Activated CD8-positive, alpha-beta T cell treated with anti-CD3 and anti-CD28 coated beads for 36 hours (primary cell): ENCODE measurements at regions of chr16 and their contacts with region 1.

Region 1: DNA sequence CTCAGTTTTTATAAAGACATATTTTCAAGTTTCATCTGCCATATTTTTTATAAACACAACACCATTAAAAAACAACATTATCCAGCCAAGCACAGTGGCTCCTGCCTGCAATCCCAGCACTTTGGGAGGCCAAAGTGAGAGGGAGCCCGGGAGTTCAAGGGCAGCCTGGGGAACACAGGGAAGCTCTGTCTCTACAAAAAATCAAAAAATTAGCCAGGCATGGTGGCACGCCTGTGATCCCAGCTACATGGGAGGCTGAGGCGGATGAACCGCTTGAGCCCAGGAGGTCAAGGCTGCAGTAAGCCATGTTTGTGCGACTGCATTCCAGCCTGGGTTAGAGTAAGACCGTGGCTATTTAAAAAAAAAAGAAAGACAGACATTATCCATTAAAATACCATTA is 17.2 kb upstream of the NTAN1 start:
- DNase-seq: no peak
- ATAC-seq: no peak
- H3K4me3 Mint-ChIP-seq: no peak overlapping the region
- H3K27ac Mint-ChIP-seq: no peak overlapping the region
- H3K4me1 Mint-ChIP-seq: peaks cover 2% of the 10 kb centered on the region
- H3K27me3 Mint-ChIP-seq: no peaks in the 10 kb centered on the region
- CTCF ChIP-seq: no peak

Region 2: DNA sequence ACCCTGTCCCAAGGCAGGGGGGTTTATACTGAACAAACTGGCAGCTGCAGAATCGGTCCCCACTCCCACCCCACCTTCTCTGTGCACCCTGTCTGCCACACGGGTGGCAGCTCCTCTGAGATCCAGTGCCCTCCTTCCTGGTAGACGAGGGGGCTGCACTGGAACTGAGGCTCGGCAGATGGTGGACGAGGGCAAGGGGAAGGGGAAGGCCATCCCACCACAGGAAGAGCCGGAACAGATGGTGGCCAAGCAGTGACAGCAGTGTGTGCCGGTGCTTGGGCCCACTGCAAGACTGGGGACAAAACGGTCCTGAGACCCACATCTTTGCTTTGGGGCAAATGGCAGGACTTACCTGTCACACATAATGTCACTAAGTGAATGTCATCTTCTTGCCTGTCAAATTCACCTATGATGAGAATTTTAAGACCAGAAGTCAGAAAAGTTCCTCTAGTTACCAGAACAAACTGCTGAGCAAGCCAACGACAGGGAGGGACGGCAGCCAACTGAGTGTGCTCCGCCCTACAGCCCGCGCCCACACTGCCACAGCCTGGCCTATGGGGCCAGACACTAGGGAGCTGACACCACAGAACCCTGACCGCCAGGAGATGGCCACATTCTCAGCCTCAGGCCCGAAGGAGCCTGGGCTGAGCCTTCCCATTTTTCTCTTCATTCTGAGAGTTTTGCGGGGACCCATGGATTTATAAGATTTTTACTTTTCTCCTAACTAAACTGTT is 31.7 kb before region 1 on chr16:
- CTCF ChIA-PET with region 1: no interaction called
- POLR2A ChIA-PET with region 1: no interaction called
- intact Hi-C with region 1: no loop called
- DNase-seq: no peak
- ATAC-seq: no peak
- H3K4me3 Mint-ChIP-seq: no peak overlapping the region
- H3K27ac Mint-ChIP-seq: no peak overlapping the region
- H3K4me1 Mint-ChIP-seq: peaks cover 2% of the 10 kb centered on the region
- H3K27me3 Mint-ChIP-seq: no peaks in the 10 kb centered on the region
- CTCF ChIP-seq: no peak

Region 3: DNA sequence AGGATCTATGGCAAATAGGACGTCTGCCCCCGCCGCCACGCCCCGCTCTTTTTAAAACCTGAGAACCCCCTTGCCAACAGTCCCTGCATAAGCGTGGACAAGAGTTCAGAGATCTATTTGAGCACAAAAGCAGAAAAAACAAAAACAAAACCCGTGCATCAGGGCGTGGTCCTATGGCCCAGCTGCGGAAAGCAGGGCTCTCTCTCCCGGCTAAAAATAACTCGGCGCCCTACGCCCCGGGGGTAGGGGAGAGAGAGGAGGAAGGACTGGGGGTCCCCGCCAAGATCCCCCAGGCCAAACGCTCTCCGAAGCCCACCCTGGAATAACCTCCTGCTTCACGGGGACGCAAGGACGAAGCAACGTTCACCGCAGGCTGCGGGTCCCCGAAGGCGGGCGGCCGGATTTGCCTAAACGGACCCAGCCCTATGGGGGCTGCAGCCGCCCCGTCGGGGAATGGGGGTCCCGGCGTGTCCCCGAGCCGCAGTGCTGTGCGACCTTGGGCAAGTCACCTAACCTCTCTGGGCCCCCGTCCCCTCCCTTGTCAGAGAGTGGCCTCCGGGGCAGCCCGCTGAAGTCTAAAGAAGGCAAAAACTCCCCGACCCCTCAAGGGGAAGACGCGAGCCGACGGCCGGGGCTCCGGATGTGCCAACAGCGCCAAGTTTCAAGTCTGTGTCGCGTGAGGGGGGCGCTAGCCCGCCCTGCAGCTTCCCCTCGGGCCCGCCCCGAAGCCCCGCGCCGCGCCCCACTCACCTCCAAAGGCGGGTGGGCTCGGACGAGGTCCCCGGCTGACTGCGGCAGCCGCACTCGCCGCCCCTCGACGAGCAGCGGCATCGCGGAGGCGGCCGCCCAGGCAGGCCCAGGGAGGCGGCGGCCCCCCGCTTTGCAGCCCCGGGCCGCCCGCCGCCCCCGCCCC is 17.7 kb before region 1 on chr16:
- CTCF ChIA-PET with region 1: interaction called, 14 read pairs
- POLR2A ChIA-PET with region 1: no interaction called
- intact Hi-C with region 1: no loop called
- DNase-seq: peak; percentile 79
- ATAC-seq: peak; percentile 69
- H3K4me3 Mint-ChIP-seq: peak overlapping the region; percentile 82
- H3K27ac Mint-ChIP-seq: peak overlapping the region; percentile 75
- H3K4me1 Mint-ChIP-seq: peaks cover 19% of the 10 kb centered on the region
- H3K27me3 Mint-ChIP-seq: no peaks in the 10 kb centered on the region
- CTCF ChIP-seq: peak; percentile 40

Region 4: DNA sequence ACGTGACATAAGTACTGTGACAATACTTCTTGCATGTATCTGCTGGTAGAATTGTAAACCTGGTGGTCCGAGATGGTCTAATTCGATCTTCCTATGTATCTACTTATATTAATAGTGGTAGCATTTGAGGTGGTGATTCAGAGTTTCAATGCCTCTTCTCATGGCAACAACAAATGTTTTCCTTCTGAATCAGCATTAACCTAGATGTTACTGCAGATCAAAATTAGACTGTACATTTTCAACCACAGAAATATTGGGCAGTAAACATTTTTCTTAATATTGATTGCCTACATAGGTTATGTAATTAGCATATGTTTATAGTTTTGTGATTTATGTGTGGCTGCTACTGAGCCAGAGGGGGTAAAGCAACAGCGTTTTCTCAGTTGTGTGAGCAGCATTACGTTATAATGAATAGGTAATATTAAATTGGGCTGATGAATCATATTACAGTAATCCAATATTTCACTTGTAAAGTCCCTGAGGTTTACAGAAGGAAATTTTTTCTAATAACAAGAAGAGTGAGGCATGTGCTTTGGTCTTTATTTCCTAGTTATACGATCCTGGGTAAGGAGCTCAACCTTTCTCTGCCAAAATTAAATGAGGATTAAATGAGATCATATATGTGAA is 342.4 kb after region 1 on chr16:
- CTCF ChIA-PET with region 1: no interaction called
- POLR2A ChIA-PET with region 1: no interaction called
- intact Hi-C with region 1: no loop called
- DNase-seq: no peak
- ATAC-seq: no peak
- H3K4me3 Mint-ChIP-seq: no peak overlapping the region
- H3K27ac Mint-ChIP-seq: no peak overlapping the region
- H3K4me1 Mint-ChIP-seq: no peaks in the 10 kb centered on the region
- H3K27me3 Mint-ChIP-seq: no peaks in the 10 kb centered on the region
- CTCF ChIP-seq: no peak